ENCODE measurements at regions of chr16 and their contacts with region 1.

Region 1: DNA sequence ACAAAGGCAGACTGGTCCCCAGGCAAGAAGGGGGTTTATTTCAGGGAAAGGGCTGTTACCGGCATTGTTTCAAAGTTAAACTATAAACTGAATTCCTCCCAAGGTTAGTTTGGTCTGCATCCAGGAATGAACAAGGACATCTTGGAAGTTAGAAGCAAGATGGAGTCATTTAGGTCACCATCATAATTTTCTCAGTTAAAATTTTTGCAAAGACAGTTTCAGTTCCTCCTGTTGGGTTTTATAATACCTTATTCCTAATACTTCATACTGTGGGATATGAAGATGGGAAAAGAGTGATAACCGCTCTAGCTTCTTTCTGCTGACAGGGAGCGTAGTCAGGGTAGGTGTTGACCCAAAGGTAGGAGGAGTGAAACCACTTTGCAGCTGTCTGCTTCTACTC is 24.8 kb downstream of the PMM2 start:
- DNase-seq: no peak
- ATAC-seq: no peak
- H3K4me3 ChIP-seq: no peak overlapping the region
- H3K27ac ChIP-seq: no peak overlapping the region
- H3K4me1 ChIP-seq: peaks cover 0 to 16% (median 5%) of the 10 kb centered on the region in 9 donors
- H3K27me3 ChIP-seq: no peaks in the 10 kb centered on the region
- CTCF ChIP-seq: no peak

Region 2: GRCh38 chr16:8751481-8752311 is 70.7 kb before region 1 on chr16:
- intact Hi-C with region 1: loop called in 1 of 10 experiments (anchors 2 kb)
- DNase-seq: no peak
- ATAC-seq: peak in 6 of 8 donors; percentile 66 to 88 (median 76)
- H3K4me3 ChIP-seq: no peak overlapping the region
- H3K27ac ChIP-seq: peak overlapping the region in 2 of 10 donors; percentile 14 to 30
- H3K4me1 ChIP-seq: peaks cover 0 to 14% (median 6%) of the 10 kb centered on the region in 9 donors
- H3K27me3 ChIP-seq: no peaks in the 10 kb centered on the region
- CTCF ChIP-seq: no peak